ENCODE measurements at regions of chr13 and their contacts with region 1.

Region 1: DNA sequence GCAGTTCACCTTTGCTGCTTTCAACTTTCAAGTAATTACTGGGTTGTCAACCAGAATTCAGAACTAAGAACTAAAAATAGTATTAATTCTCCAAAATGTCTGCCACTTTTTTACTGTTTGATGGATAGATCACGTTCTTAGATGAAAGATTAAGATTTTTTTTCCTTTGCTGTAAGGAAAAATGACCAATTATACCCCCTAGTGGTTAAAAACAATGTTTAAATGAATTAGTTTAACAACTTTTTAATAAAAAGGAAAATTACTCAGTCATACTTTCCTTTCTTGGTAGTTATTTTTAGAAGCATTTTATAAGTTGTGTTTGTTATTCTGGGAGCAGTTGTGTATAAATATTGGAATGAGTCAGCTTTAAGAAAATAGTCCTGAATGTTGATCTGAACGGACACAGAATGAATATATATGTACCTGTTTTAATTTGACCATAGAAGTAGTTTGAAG is 4.6 kb downstream of the TM9SF2 start:
- DNase-seq: no peak
- H3K4me3 Mint-ChIP-seq: no peak overlapping the region
- H3K27ac Mint-ChIP-seq: no peak overlapping the region
- H3K4me1 Mint-ChIP-seq: no peaks in the 10 kb centered on the region
- H3K27me3 Mint-ChIP-seq: no peaks in the 10 kb centered on the region
- CTCF ChIP-seq: no peak

Region 2: DNA sequence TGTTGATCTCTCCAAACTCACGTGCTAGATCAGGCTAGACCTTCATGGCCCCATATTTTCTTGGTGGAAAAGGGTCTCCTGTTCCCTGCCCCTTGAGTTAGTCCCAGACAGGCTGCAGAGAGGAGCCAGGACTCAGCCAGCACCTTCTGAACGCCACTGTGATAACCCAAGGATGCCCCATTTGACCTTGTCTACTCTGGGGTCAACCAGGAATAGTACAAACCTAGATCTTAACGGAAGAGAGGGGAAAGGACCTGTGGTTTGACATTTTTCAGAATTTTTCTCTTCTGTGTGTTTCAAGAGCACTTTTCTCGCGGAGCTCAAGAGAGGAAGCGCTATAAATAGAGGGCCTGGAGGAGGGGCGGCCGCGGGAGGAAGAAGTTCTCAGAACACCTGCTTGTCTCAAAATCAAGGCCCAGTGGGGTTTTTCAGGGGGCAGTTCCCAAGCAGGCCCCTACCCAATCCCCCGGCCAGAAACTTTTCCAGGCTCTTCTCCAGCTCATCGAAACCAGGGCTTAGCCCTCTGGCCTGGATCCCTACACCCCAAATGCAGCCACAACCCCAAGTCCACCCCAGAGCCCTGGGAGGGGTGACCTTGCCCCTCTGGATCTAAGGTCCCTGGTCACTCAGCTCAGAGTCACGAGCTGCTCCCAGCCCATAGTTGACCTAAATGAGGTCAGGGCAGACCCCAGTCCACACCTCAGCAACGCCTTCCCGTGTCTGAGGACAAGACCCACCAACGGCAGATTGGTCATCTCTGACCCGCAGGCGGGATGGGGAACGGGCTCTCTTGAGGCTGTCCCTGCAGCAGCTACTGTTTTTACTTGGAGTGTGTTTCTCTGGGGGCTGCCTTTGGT is 80.1 kb before region 1 on chr13:
- CTCF ChIA-PET with region 1: no interaction called
- intact Hi-C with region 1: no loop called
- DNase-seq: no peak
- H3K4me3 Mint-ChIP-seq: no peak overlapping the region
- H3K27ac Mint-ChIP-seq: no peak overlapping the region
- H3K4me1 Mint-ChIP-seq: no peaks in the 10 kb centered on the region
- H3K27me3 Mint-ChIP-seq: peaks cover 27% of the 10 kb centered on the region
- CTCF ChIP-seq: no peak

Region 3: DNA sequence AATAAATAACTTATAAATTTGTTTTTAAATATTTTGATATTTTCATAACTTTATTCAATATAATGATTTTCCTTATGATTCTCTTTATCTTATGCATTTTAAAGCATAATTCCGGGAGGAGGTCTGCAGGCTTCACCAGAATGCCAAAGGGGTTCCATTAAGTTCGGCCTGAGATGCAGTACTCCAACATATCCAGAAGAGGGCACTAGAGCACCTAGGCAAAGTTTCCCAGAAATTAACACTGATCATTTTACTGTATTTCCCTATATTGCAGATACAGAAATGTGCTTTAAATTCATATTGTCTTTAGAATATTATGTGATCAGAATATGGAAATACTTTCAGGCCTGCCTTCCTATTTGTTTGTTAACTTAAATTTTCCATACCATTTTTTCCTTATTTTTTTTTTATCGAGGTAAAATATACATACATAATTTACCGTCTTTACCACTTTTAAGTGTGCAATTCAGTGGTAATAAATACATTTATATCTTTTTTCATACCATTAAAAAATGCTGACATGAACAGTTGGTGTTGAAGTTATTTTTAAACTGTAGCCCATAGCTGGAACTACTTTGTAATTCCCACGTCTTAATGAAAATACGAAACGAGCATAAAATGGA is 63.5 kb before region 1 on chr13:
- CTCF ChIA-PET with region 1: no interaction called
- intact Hi-C with region 1: loop called (anchors 1 kb)
- DNase-seq: no peak
- H3K4me3 Mint-ChIP-seq: no peak overlapping the region
- H3K27ac Mint-ChIP-seq: no peak overlapping the region
- H3K4me1 Mint-ChIP-seq: no peaks in the 10 kb centered on the region
- H3K27me3 Mint-ChIP-seq: peaks cover 12% of the 10 kb centered on the region
- CTCF ChIP-seq: peak; percentile 39